T-cell (primary cell): ENCODE measurements at regions of chr2 and their contacts with region 1.

Region 1: GRCh38 chr2:37068686-37069085 is 15.5 kb downstream of the HEATR5B start:
- DNase-seq: no peak
- ATAC-seq: no peak
- H3K4me3 ChIP-seq: no peak overlapping the region
- H3K4me3 Mint-ChIP-seq: no peak overlapping the region
- H3K27ac ChIP-seq: no peak overlapping the region
- H3K27ac Mint-ChIP-seq: no peak overlapping the region
- H3K4me1 ChIP-seq: no peaks in the 10 kb centered on the region
- H3K4me1 Mint-ChIP-seq: peaks cover 15 to 22% (median 17%) of the 10 kb centered on the region in 3 donors
- H3K27me3 ChIP-seq: no peaks in the 10 kb centered on the region
- H3K27me3 Mint-ChIP-seq: no peaks in the 10 kb centered on the region

Region 2: DNA sequence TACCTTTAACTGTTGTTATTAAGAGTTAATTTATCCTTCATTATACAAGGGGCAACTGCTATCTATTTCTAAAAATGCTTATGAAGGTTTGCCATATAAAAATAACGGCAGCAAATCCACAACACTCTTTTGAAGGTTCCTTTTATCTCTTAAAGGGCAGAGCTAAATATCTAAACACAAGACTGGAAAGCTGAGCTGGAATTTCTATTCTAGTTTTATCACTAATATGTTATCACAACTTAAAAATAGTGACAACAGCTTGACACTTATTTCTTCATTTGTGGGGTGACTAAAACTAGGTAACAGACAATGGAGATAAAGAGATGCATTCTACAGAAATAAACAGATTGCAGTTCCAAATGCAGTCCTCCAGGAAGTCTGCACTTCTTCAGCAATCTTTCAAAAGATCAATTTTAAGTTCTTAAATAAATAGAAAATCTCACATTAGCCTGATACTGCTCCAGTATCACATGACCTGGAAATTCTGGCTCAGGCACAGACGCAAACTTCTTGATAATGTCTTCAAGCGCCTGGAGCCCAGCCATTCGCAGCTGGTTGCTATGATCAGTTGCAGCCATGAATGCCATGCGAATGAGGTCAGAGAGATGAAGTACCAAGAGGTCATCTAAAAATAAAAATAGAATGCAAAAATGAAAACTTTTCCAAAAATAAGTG is 48.3 kb before region 1 on chr2:
- CTCF ChIA-PET with region 1: no interaction called
- POLR2A ChIA-PET with region 1: interaction called in 1 of 2 experiments, 10 read pairs
- DNase-seq: no peak
- ATAC-seq: no peak
- H3K4me3 ChIP-seq: no peak overlapping the region
- H3K4me3 Mint-ChIP-seq: no peak overlapping the region
- H3K27ac ChIP-seq: no peak overlapping the region
- H3K27ac Mint-ChIP-seq: no peak overlapping the region
- H3K4me1 ChIP-seq: no peaks in the 10 kb centered on the region
- H3K4me1 Mint-ChIP-seq: peaks cover 0 to 5% (median 0%) of the 10 kb centered on the region in 3 donors
- H3K27me3 ChIP-seq: no peaks in the 10 kb centered on the region
- H3K27me3 Mint-ChIP-seq: no peaks in the 10 kb centered on the region

Region 3: DNA sequence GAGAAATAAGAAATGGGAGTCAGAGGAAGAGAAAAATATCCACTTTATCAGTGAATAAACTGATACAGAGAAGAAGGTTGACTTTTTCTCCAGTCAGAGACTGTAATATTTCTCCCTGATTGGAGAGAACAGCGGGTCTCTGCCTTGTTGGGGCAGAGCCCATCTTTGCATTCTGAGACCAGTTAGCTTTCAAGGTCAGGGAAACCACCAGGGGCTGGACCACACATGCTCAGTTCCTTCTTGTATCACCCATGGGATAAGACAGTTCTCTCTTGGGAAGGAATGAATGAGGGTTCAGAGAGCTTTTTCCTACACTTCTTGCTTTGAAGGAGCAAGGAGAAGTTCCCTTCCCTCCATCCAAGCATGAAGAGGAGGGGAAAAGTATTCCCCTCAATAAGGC is 27.9 kb after region 1 on chr2:
- CTCF ChIA-PET with region 1: no interaction called
- POLR2A ChIA-PET with region 1: interaction called in 1 of 2 experiments, 10 read pairs
- DNase-seq: no peak
- ATAC-seq: no peak
- H3K4me3 ChIP-seq: no peak overlapping the region
- H3K4me3 Mint-ChIP-seq: no peak overlapping the region
- H3K27ac ChIP-seq: no peak overlapping the region
- H3K27ac Mint-ChIP-seq: peak overlapping the region in 1 of 2 donors; percentile 44
- H3K4me1 ChIP-seq: no peaks in the 10 kb centered on the region
- H3K4me1 Mint-ChIP-seq: no peaks in the 10 kb centered on the region
- H3K27me3 ChIP-seq: no peaks in the 10 kb centered on the region
- H3K27me3 Mint-ChIP-seq: no peaks in the 10 kb centered on the region